ENCODE measurements at regions of chr12 and their contacts with region 1.

Region 1: DNA sequence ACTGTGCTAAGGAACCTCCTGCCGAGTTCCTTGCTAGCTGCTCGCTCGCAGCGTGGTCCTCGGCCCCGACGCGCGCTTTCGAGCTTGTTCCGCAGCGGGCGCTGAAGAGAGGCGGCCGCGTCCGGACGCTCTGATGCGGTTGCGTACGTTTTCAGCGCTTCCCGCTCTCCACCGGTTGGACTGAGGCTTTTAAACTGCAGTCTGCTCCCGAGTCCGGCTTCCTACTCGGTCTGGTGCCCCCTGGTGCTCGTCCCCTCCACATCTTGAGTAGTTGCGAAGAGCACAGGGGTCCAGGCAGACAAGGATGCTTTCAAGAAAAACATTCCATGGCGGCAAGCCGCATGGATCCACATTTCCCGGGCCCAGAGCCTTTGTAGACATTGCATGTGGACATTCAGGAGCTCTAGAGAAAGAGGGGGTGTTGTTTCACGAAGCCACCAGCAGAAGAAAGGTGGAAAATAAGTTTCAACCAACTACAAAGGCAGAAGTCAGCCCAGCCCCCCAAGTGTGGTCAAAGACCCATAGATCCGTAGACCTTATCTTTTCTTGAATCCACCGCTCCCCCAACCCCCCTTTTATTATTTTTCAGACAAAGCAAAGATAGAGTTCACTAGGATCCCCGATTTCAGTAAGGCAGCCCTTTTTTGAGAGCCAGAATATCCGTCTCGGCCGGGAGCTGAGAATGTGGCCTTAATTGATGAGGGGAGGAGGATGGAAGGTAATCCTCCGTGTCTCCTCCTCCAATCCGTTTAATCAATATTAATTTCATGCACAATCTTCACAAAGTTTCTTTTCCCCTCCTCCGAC is 984 bp upstream of the WNK1 start:
- DNase-seq: peak; percentile 94
- ATAC-seq: peak; percentile 47
- H3K4me3 ChIP-seq: peak overlapping the region; percentile 54 to 92 (median 87)
- H3K4me3 Mint-ChIP-seq: no peak overlapping the region
- H3K27ac ChIP-seq: peak overlapping the region; percentile 86 to 90
- H3K27ac Mint-ChIP-seq: no peak overlapping the region
- H3K4me1 ChIP-seq: peaks cover 23 to 25% of the 10 kb centered on the region in 2 donors
- H3K4me1 Mint-ChIP-seq: peaks cover 27% of the 10 kb centered on the region
- H3K27me3 ChIP-seq: no peaks in the 10 kb centered on the region
- H3K27me3 Mint-ChIP-seq: no peaks in the 10 kb centered on the region
- CTCF ChIP-seq: peak; percentile 60

Region 2: DNA sequence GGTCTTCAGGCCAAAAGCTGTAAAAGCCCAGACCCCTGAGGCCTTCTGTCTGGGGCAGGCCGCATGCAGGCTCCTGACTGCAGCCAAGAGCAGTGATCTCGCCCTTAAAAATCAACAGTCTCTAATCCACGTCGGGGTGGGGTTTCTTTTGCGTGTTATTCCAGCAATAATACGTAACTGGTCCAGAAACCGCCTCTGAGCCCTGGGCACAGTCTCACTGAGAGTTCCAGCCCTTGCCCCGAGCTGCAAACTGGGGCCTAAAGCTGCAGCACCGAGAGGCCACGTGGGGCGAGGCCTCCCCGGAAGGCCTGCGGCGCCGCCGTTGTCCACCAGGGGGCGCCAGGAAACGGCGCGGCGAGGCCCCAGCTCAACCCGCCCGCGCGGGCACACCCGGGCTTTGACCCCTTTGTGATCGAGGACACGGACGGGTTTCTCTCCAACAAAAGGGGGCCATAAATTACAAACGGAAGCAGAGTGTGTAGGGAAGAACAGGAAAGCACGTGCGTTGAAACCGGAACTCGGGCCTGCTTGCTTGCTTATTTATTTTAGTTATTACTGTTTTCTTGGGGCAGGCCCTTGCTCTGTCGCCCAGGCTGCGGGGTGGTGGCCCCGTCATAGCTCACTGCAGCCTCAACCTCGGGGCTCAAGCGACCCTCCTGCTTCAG is 175.3 kb before region 1 on chr12:
- CTCF ChIA-PET with region 1: interaction called, 71 read pairs
- POLR2A ChIA-PET with region 1: interaction called, 6 read pairs
- intact Hi-C with region 1: loop called (anchors 1 kb)
- DNase-seq: peak; percentile 88
- ATAC-seq: peak; percentile 99
- H3K4me3 ChIP-seq: peak overlapping the region in 4 of 5 experiments; percentile 20 to 34 (median 26)
- H3K4me3 Mint-ChIP-seq: peak overlapping the region; percentile 79
- H3K27ac ChIP-seq: no peak overlapping the region
- H3K27ac Mint-ChIP-seq: peak overlapping the region; percentile 65
- H3K4me1 ChIP-seq: peaks cover 8 to 12% of the 10 kb centered on the region in 2 donors
- H3K4me1 Mint-ChIP-seq: peaks cover 8% of the 10 kb centered on the region
- H3K27me3 ChIP-seq: no peaks in the 10 kb centered on the region
- H3K27me3 Mint-ChIP-seq: no peaks in the 10 kb centered on the region
- CTCF ChIP-seq: peak; percentile 97

Region 3: DNA sequence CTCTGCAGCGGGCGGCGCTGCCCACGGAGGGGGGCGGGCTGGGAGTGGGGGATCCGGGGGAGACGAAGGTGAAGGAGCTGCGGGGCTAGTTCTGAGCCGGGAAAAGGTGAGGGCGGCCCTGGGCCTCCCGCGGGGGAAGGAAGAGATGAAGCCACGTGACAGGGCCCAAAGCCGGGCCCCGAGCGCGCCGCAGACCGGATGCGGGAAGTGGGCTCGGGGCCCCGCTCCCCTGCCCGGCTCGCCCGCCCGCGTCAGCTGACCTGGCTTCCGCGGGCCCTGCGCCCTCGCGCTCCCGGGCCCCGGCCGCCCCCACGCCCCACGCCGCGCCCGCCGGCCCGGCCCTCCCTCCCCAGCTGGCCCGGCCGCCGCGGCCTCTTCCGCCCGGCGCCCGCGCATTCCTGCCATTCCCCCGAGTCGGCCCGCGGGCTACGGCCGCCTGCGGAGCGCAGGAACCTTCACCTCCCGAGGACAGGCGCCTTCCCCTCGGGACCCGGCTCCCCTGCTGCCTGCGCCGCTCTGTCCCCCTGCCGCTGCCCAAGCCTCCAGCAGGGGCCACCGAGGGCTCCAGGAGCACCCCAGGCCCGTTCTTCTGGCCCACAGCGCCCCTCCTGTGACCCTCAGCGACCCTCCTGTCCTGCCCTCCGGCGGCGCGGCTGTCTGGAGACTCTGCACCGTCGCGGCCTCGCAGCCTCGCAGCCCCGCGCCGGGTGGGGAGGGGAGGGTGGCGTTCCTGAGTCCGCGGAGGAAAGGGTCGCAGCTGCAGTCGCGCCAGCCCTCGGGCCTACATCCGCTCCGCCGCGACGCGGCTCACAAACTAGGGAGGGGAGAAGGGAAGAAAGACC is 108.5 kb before region 1 on chr12:
- CTCF ChIA-PET with region 1: interaction called, 28 read pairs
- POLR2A ChIA-PET with region 1: interaction called, 25 read pairs
- intact Hi-C with region 1: loop called (anchors 1 kb)
- DNase-seq: peak; percentile 86
- ATAC-seq: peak; percentile 75
- H3K4me3 ChIP-seq: peak overlapping the region; percentile 56 to 80 (median 78)
- H3K4me3 Mint-ChIP-seq: peak overlapping the region; percentile 89
- H3K27ac ChIP-seq: peak overlapping the region; percentile 94 to 96
- H3K27ac Mint-ChIP-seq: peak overlapping the region; percentile 99
- H3K4me1 ChIP-seq: peaks cover 28 to 43% of the 10 kb centered on the region in 2 donors
- H3K4me1 Mint-ChIP-seq: peaks cover 51% of the 10 kb centered on the region
- H3K27me3 ChIP-seq: no peaks in the 10 kb centered on the region
- H3K27me3 Mint-ChIP-seq: no peaks in the 10 kb centered on the region
- CTCF ChIP-seq: peak; percentile 43

Region 4: DNA sequence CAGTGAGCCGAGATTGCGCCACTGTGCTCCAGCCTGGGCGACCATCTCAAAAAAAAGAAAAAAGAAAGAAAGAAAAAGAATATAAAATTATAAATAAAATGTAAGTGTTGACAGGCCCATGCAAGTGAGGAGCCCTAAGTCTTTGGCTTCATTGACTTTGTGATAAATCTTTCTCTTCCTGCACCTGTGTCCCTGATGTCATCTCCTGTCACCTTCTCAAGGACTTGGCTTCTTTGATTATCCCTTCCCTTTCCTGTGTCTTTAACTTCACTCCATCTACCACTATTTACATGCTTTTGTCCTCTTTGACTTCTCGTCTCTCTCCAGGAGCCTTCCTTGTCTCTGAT is 32.7 kb before region 1 on chr12:
- CTCF ChIA-PET with region 1: interaction called, 15 read pairs
- POLR2A ChIA-PET with region 1: interaction called, 10 read pairs
- intact Hi-C with region 1: loop called (anchors 1 kb)
- DNase-seq: no peak
- ATAC-seq: no peak
- H3K4me3 ChIP-seq: peak overlapping the region in 1 of 5 experiments; percentile 23
- H3K4me3 Mint-ChIP-seq: peak overlapping the region; percentile 87
- H3K27ac ChIP-seq: peak overlapping the region; percentile 31 to 78
- H3K27ac Mint-ChIP-seq: peak overlapping the region; percentile 97
- H3K4me1 ChIP-seq: peaks cover 14 to 17% of the 10 kb centered on the region in 2 donors
- H3K4me1 Mint-ChIP-seq: peaks cover 24% of the 10 kb centered on the region
- H3K27me3 ChIP-seq: no peaks in the 10 kb centered on the region
- H3K27me3 Mint-ChIP-seq: no peaks in the 10 kb centered on the region
- CTCF ChIP-seq: no peak

Region 5: GRCh38 chr12:949453-950191 is 198.2 kb after region 1 on chr12 and contains the start of gene RAD52:
- CTCF ChIA-PET with region 1: interaction called, 5 read pairs
- POLR2A ChIA-PET with region 1: interaction called, 6 read pairs
- intact Hi-C with region 1: loop called (anchors 1 kb)
- DNase-seq: peak; percentile 99
- ATAC-seq: peak; percentile 86
- H3K4me3 ChIP-seq: peak within 1 kb of the TSS; percentile 67 to 91 (median 74)
- H3K4me3 Mint-ChIP-seq: peak within 1 kb of the TSS; percentile 88
- H3K27ac ChIP-seq: peak within 1 kb of the TSS; percentile 82 to 84
- H3K27ac Mint-ChIP-seq: peak within 1 kb of the TSS; percentile 90
- H3K4me1 ChIP-seq: peaks cover 0 to 13% of the 10 kb centered on the region in 2 donors
- H3K4me1 Mint-ChIP-seq: peaks cover 27% of the 10 kb centered on the region
- H3K27me3 ChIP-seq: no peaks in the 10 kb centered on the region
- H3K27me3 Mint-ChIP-seq: no peaks in the 10 kb centered on the region
- CTCF ChIP-seq: peak; percentile 99
- total RNA-seq, gene RAD52: 22.9 and 27.6 TPM in 2 replicates

Region 6: DNA sequence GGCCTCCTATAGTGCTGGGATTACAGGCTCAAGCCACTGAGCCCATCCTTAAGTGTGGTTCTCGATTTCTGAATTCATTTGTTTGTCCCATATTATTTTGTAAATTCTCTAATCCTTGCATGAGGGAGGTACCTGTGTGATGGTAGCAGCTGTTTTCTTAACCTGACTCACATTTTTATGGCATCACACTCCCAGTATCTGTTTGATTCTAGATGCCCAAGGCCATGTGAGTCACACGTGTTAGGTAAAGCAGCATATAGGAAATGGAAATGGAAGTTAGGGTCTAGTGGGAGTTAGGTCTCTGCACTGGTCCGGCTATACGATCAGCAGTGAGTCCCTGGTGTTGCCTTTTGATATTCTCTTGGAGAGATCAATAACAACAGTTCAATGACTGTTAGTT is 437.8 kb after region 1 on chr12:
- CTCF ChIA-PET with region 1: no interaction called
- POLR2A ChIA-PET with region 1: no interaction called
- intact Hi-C with region 1: no loop called
- DNase-seq: no peak
- ATAC-seq: no peak
- H3K4me3 ChIP-seq: no peak overlapping the region
- H3K4me3 Mint-ChIP-seq: no peak overlapping the region
- H3K27ac ChIP-seq: no peak overlapping the region
- H3K27ac Mint-ChIP-seq: no peak overlapping the region
- H3K4me1 ChIP-seq: no peaks in the 10 kb centered on the region
- H3K4me1 Mint-ChIP-seq: peaks cover 2% of the 10 kb centered on the region
- H3K27me3 ChIP-seq: no peaks in the 10 kb centered on the region
- H3K27me3 Mint-ChIP-seq: no peaks in the 10 kb centered on the region
- CTCF ChIP-seq: no peak

Region 7: DNA sequence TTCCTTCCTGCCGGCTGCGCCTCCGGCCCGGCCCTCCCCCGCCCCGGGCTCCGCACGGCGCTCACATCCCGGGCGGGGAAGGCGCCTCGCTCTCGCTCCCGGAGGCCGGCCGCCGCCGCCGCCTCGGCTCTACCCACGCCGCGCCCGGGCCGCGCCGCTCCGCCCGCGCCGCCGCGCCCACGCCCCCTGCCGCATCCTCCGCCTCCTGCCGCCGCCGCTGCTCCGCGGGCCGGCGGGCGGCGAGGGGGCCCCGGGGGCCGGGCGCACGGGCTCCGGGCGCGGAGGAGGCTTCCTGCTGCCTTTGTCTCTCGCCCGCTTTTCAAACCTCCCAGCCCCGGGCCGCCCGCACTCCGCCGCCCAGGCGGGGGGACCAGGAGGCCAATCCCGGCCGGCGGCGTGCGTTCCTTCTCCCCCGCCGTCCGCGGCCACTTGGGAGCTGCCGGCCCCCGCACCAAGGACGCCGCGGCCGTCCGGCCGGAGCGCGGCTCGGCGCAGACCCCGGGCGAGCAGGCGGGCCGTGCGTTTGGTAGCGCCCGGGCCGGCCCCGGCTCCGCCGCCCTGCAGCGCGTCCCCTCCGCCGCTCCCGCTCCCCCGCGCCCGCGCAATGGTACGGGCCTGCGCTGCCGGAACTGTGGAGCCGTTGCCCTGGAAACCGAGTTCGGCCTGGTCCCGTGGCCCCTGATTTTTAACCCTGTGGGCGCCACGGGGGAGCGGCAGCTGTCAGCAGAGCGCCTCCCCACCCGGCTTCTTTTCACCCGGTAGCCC is 843.0 kb after region 1 on chr12 and contains the start of gene FBXL14:
- CTCF ChIA-PET with region 1: no interaction called
- POLR2A ChIA-PET with region 1: no interaction called
- intact Hi-C with region 1: loop called (anchors 1 kb)
- DNase-seq: peak; percentile 95
- ATAC-seq: peak; percentile 65
- H3K4me3 ChIP-seq: peak within 1 kb of the TSS; percentile 59 to 81 (median 73)
- H3K4me3 Mint-ChIP-seq: peak within 1 kb of the TSS; percentile 94
- H3K27ac ChIP-seq: peak within 1 kb of the TSS; percentile 80 to 96
- H3K27ac Mint-ChIP-seq: peak within 1 kb of the TSS; percentile 97
- H3K4me1 ChIP-seq: peaks cover 38 to 41% of the 10 kb centered on the region in 2 donors
- H3K4me1 Mint-ChIP-seq: peaks cover 50% of the 10 kb centered on the region
- H3K27me3 ChIP-seq: no peaks in the 10 kb centered on the region
- H3K27me3 Mint-ChIP-seq: no peaks in the 10 kb centered on the region
- CTCF ChIP-seq: no peak
- total RNA-seq, gene FBXL14: 33.9 and 37.3 TPM in 2 replicates

Measured in B cell (primary cell).